HepG2 (cell line): ENCODE measurements at regions of chr2 and their contacts with region 1.

Region 1: GRCh38 chr2:36502081-36502480 is 95.9 kb downstream of the FEZ2 start:
- DNase-seq: peak; percentile 99
- ATAC-seq: peak; percentile 69
- H3K4me3 ChIP-seq: no peak overlapping the region
- H3K27ac ChIP-seq: peak overlapping the region; percentile 69
- H3K4me1 ChIP-seq: peaks cover 67% of the 10 kb centered on the region
- H3K27me3 ChIP-seq: no peaks in the 10 kb centered on the region
- CTCF ChIP-seq: no peak
- EP300 ChIP-seq: peak; percentile 89 to 100; a peak in 3 of 4 replicates
- POLR2A ChIP-seq: no peak
- RAD21 ChIP-seq: no peak

Region 2: GRCh38 chr2:36376319-36376765 is 125.7 kb before region 1 on chr2:
- CTCF ChIA-PET with region 1: no interaction called
- POLR2A ChIA-PET with region 1: no interaction called
- in situ Hi-C with region 1: no loop called
- intact Hi-C with region 1: loop called (anchors 5 kb)
- DNase-seq: peak; percentile 93
- ATAC-seq: peak; percentile 77
- H3K4me3 ChIP-seq: peak overlapping the region in 2 of 3 experiments; percentile 6 to 16; a peak in 1 of 6 replicates
- H3K27ac ChIP-seq: peak overlapping the region; percentile 75
- H3K4me1 ChIP-seq: peaks cover 100% of the 10 kb centered on the region
- H3K27me3 ChIP-seq: no peaks in the 10 kb centered on the region
- CTCF ChIP-seq: no peak
- EP300 ChIP-seq: peak in 1 of 2 experiments; percentile 74; a peak in 2 of 4 replicates
- POLR2A ChIP-seq: no peak
- RAD21 ChIP-seq: no peak

Region 3: GRCh38 chr2:36433311-36434217 is 68.5 kb before region 1 on chr2:
- CTCF ChIA-PET with region 1: no interaction called
- POLR2A ChIA-PET with region 1: no interaction called
- in situ Hi-C with region 1: no loop called
- intact Hi-C with region 1: loop called (anchors 2 kb)
- DNase-seq: peak; percentile 97
- ATAC-seq: peak; percentile 98
- H3K4me3 ChIP-seq: no peak overlapping the region; a peak in 1 of 6 replicates
- H3K27ac ChIP-seq: peak overlapping the region; percentile 5
- H3K4me1 ChIP-seq: peaks cover 34% of the 10 kb centered on the region
- H3K27me3 ChIP-seq: no peaks in the 10 kb centered on the region
- CTCF ChIP-seq: no peak
- EP300 ChIP-seq: peak; percentile 39 to 80; a peak in 3 of 4 replicates
- POLR2A ChIP-seq: no peak
- RAD21 ChIP-seq: peak; percentile 16; the same call in 1 of the 2 replicates

Region 4: GRCh38 chr2:36486546-36487044 is 15.5 kb before region 1 on chr2:
- CTCF ChIA-PET with region 1: no interaction called
- POLR2A ChIA-PET with region 1: no interaction called
- in situ Hi-C with region 1: no loop called
- intact Hi-C with region 1: loop called (anchors 2 kb)
- DNase-seq: peak; percentile 79
- ATAC-seq: peak; percentile 76
- H3K4me3 ChIP-seq: no peak overlapping the region
- H3K27ac ChIP-seq: peak overlapping the region; percentile 71
- H3K4me1 ChIP-seq: peaks cover 71% of the 10 kb centered on the region
- H3K27me3 ChIP-seq: no peaks in the 10 kb centered on the region
- CTCF ChIP-seq: no peak
- EP300 ChIP-seq: peak in 1 of 2 experiments; percentile 91; a peak in 2 of 4 replicates
- POLR2A ChIP-seq: no peak
- RAD21 ChIP-seq: no peak